ENCODE measurements at regions of chr5 and their contacts with region 1.

Region 1: DNA sequence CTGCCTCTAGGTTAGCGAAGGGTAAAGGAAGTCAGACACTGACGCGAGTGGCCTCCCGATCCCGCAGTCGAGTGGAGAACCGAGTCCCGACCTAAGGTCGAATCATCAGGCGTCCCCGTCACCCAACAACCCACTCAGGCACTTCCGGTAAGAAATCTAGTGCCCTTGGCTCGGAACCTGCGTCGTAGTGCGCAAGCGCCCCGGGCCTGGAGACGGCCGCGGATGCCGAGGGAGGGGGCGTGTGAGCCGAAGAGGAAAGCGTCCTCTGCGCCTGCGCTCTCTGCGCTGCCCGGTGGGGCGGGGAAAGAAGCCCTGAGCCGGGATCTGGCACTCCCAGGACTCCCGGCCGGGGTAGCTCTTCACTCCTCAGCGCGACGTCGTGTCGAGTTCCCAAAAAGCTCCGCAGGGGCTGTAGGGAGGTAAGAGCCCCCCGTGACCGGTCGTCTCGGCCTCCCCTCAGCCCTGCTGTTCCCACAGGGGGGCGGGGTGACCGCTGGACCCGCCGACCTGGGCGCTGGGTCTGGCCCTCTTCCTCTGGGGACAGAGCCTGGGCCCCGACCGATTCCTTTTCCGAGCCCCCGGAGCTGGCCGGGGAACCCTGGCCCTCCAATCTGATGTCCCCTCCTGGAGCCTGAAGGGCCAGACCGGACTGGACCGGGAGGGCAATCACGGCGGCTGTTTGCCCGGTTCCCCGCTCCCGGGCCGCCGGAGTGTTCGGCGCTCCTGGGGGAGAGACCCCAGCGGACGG is at the start of gene ZFYVE16:
- DNase-seq: peak; percentile 98
- H3K4me3 ChIP-seq: peak within 1 kb of the TSS; percentile 68 to 85 (median 78)
- H3K27ac ChIP-seq: peak within 1 kb of the TSS; percentile 91
- H3K4me1 ChIP-seq: peaks cover 18% of the 10 kb centered on the region
- H3K27me3 ChIP-seq: no peaks in the 10 kb centered on the region
- CTCF ChIP-seq: peak in 1 of 2 donors; percentile 39
- POLR2A ChIP-seq: peak; percentile 92
- total RNA-seq, gene ZFYVE16: 36.8 and 43.1 TPM in 2 replicates

Region 2: DNA sequence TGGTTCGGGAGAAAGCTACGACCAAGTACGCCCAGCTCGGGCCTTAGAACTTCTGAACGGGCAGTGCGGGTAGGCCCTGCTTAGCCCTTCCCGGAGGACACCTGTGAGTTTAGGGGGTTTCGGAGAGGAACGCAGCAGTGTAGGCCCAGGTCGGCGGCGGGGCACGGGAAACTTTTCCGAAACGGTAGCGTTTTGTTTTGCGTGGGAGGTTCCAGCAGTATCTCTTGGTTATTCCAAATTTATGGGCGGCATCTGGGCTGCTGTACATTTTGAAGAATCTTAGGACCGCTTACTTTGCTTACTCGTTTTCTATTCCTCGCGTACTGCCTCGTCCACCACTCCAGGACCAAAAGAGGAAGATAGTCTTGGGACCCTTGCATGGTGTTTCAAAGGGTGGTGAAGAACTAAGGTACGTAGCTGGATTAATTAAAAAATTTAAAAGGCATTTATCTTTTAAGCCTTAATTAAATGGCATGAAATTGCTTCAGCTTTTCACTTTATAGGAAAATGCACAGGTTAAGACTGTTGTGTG is 795.2 kb before region 1 on chr5:
- CTCF ChIA-PET with region 1: no interaction called
- POLR2A ChIA-PET with region 1: interaction called, 3 read pairs
- dilution Hi-C with region 1: no loop called
- intact Hi-C with region 1: loop called (anchors 10 kb)
- DNase-seq: no peak
- H3K4me3 ChIP-seq: peak overlapping the region; percentile 70 to 95 (median 95)
- H3K27ac ChIP-seq: peak overlapping the region; percentile 64
- H3K4me1 ChIP-seq: peaks cover 5% of the 10 kb centered on the region
- H3K27me3 ChIP-seq: no peaks in the 10 kb centered on the region
- CTCF ChIP-seq: peak in 1 of 2 donors; percentile 1
- POLR2A ChIP-seq: no peak

Region 3: GRCh38 chr5:80255732-80256479 is 152.0 kb before region 1 on chr5 and contains the start of gene SERINC5:
- CTCF ChIA-PET with region 1: no interaction called
- POLR2A ChIA-PET with region 1: interaction called, 3 read pairs
- dilution Hi-C with region 1: no loop called
- intact Hi-C with region 1: loop called (anchors 1 kb)
- DNase-seq: peak; percentile 79
- H3K4me3 ChIP-seq: peak within 1 kb of the TSS; percentile 64 to 85 (median 70)
- H3K27ac ChIP-seq: peak within 1 kb of the TSS; percentile 65
- H3K4me1 ChIP-seq: peaks cover 7% of the 10 kb centered on the region
- H3K27me3 ChIP-seq: no peaks in the 10 kb centered on the region
- CTCF ChIP-seq: peak in 1 of 2 donors; percentile 3
- POLR2A ChIP-seq: peak; percentile 96
- total RNA-seq, gene SERINC5: 9.9 and 10.1 TPM in 2 replicates

Region 4: GRCh38 chr5:80588858-80589540 is 181.1 kb after region 1 on chr5:
- CTCF ChIA-PET with region 1: no interaction called
- POLR2A ChIA-PET with region 1: no interaction called
- dilution Hi-C with region 1: no loop called
- intact Hi-C with region 1: no loop called
- DNase-seq: no peak
- H3K4me3 ChIP-seq: no peak overlapping the region
- H3K27ac ChIP-seq: no peak overlapping the region
- H3K4me1 ChIP-seq: no peaks in the 10 kb centered on the region
- H3K27me3 ChIP-seq: peaks cover 2 to 4% of the 10 kb centered on the region in 2 experiments
- CTCF ChIP-seq: no peak
- POLR2A ChIP-seq: no peak

Region 5: DNA sequence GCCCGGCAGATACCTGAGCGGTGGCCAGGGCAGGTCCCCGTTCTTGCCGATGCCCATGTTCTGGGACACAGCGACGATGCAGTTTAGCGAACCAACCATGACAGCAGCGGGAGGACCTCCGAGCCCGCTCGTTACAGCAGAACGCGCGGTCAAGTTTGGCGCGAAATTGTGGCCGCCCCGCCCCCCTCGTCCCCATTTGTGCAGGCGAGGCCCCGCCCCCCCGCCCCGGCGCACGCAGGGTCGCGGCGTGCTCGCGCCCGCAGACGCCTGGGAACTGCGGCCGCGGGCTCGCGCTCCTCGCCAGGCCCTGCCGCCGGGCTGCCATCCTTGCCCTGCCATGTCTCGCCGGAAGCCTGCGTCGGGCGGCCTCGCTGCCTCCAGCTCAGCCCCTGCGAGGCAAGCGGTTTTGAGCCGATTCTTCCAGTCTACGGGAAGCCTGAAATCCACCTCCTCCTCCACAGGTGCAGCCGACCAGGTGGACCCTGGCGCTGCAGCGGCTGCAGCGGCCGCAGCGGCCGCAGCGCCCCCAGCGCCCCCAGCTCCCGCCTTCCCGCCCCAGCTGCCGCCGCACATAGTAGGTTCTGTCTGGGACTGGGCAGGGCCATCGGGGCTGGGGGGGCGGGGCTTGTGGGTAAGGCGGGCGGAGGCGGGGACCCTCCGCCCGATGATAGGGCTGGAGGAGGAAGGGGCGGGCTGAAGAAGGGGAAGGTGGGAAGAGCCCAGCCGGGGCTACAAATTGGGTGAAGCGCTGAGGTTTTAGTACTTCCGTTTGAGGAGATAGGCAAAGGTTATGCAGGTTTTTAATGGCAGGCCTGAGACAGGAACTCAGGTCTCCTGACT is 246.7 kb after region 1 on chr5 and contains the starts of genes DHFR and MSH3:
- CTCF ChIA-PET with region 1: no interaction called
- POLR2A ChIA-PET with region 1: interaction called, 5 read pairs
- dilution Hi-C with region 1: no loop called
- intact Hi-C with region 1: loop called (anchors 2 kb)
- DNase-seq: peak; percentile 88
- H3K4me3 ChIP-seq: peak within 1 kb of the TSS; percentile 76 to 93 (median 81)
- H3K27ac ChIP-seq: peak within 1 kb of the TSS; percentile 79
- H3K4me1 ChIP-seq: peaks cover 20% of the 10 kb centered on the region
- H3K27me3 ChIP-seq: no peaks in the 10 kb centered on the region
- CTCF ChIP-seq: peak; percentile 5 to 18
- POLR2A ChIP-seq: peak; percentile 80
- total RNA-seq, gene DHFR: 32.8 and 35.8 TPM in 2 replicates
- total RNA-seq, gene MSH3: 10.5 and 13.0 TPM in 2 replicates

Region 6: GRCh38 chr5:80967500-80968181 is 559.7 kb after region 1 on chr5:
- CTCF ChIA-PET with region 1: no interaction called
- POLR2A ChIA-PET with region 1: no interaction called
- dilution Hi-C with region 1: no loop called
- intact Hi-C with region 1: loop called (anchors 2 kb)
- DNase-seq: peak; percentile 94
- H3K4me3 ChIP-seq: no peak overlapping the region
- H3K27ac ChIP-seq: peak overlapping the region; percentile 75
- H3K4me1 ChIP-seq: peaks cover 44% of the 10 kb centered on the region
- H3K27me3 ChIP-seq: no peaks in the 10 kb centered on the region
- CTCF ChIP-seq: no peak
- POLR2A ChIP-seq: peak; percentile 51

Measured in endothelial cell of umbilical vein (primary cell).